Activated CD4-positive, alpha-beta T cell treated with anti-CD3 and anti-CD28 coated beads, Interleukin-2, amount 10 ng/mL, durations not matched to agents 24 days and 14 days (primary cell): ENCODE measurements at regions of chr19 and their contacts with region 1.

Region 1: GRCh38 chr19:45886427-45887199 is 672 bp upstream of the IRF2BP1 start:
- DNase-seq: peak; percentile 96
- H3K4me3 Mint-ChIP-seq: peak overlapping the region; percentile 89
- H3K27ac Mint-ChIP-seq: peak overlapping the region; percentile 93
- H3K4me1 Mint-ChIP-seq: peaks cover 18% of the 10 kb centered on the region
- H3K27me3 Mint-ChIP-seq: no peaks in the 10 kb centered on the region

Region 2: DNA sequence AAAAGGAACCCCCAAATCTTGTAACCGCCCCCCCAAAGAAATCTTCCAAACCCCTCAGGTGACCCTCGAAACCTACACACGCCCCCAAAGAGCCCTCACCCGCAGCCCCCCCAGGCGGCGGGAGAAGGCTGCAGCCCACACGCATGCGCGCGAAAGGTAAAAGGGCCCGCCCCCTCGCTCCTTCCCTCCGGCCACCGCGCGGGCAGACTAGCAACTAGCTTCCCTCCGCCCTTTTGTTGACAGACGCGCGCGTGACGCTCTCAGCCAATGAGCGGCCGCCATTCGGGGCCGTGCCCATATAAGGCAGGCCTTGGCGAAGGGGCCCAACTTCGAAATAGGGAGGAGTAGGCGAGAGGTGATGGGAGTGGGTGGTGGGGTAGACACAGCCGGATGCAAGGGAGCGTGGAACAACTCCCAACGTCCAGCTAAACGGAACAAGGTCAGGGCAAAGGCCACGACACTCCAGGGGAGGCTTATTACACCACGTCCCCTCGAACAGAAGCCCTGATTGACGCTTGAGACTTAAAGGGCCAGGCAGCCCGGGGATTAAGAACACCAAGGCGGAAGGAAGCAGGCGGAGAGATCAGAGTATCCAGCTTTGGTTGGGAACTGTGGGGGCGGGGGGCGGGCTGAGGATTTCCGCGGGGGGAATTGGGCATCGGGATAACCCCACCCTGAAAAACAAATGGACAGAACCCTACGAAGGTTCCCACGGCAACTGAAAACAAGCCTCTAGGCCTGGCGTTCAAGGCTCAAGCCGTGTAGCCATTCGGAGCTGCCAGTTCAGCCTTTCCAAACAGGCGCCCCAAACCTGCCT is 169.2 kb before region 1 on chr19:
- intact Hi-C with region 1: loop called (anchors 1 kb)
- DNase-seq: peak; percentile 99
- H3K4me3 Mint-ChIP-seq: peak overlapping the region; percentile 88
- H3K27ac Mint-ChIP-seq: peak overlapping the region; percentile 97
- H3K4me1 Mint-ChIP-seq: peaks cover 33% of the 10 kb centered on the region
- H3K27me3 Mint-ChIP-seq: peaks cover 2% of the 10 kb centered on the region

Region 3: GRCh38 chr19:45817010-45817724 is 69.4 kb before region 1 on chr19:
- intact Hi-C with region 1: loop called (anchors 2 kb)
- DNase-seq: peak; percentile 98
- H3K4me3 Mint-ChIP-seq: no peak overlapping the region
- H3K27ac Mint-ChIP-seq: no peak overlapping the region
- H3K4me1 Mint-ChIP-seq: peaks cover 3% of the 10 kb centered on the region
- H3K27me3 Mint-ChIP-seq: no peaks in the 10 kb centered on the region

Region 4: DNA sequence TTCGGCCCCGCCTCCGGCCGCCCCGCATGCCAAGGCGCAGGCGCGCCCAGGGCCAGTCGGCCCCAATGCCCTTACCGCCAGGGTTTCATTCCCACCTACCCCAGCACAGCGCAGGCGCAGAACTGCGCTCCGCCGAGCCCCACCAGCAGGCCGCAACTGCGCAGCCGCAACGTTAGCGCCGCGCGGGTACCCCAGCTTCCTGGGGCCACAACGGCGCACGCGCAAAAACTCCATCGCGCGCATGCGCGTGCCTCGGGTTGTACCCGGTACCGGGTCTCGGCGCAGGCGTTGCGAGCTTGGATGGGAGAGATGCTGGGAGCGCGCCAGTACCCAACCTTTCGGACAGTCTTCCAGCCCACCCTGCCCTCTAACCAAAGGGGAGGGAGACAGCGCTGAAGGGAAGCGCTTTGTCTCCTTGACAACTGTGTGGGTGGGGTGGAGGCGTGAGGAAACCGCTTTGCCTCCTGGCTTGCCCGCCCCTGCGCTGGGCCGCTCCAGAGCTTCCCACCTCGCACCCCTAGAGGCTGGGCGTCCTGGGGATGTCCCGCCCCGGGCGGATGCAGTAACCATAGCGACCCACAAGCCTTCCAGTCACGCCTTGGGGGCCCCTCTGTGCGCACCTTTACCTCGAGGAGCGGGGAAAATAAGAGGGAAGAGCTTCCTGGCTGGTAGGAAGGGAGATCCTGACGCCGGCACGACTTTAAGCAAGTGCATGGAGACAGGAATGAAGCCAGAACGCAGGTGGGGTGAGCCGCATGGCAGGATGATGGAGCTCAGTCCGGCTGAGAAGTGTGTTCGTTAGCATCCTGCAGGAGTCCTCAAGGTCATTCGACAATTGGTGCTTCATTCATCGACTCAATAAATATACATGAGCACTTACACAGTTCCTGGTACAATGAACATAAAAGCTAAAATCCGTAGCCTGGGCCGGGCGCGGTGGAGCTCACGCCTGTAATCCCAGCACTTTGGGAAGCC is 16.3 kb after region 1 on chr19:
- intact Hi-C with region 1: loop called (anchors 1 kb)
- DNase-seq: peak; percentile 100
- H3K4me3 Mint-ChIP-seq: peak overlapping the region; percentile 85
- H3K27ac Mint-ChIP-seq: peak overlapping the region; percentile 91
- H3K4me1 Mint-ChIP-seq: peaks cover 22% of the 10 kb centered on the region
- H3K27me3 Mint-ChIP-seq: peaks cover 2% of the 10 kb centered on the region

Region 5: GRCh38 chr19:45994989-45995714 is 108.5 kb after region 1 on chr19 and contains the start of gene CCDC61:
- intact Hi-C with region 1: loop called (anchors 1 kb)
- DNase-seq: peak; percentile 99
- H3K4me3 Mint-ChIP-seq: no peak within 1 kb of the TSS
- H3K27ac Mint-ChIP-seq: no peak within 1 kb of the TSS
- H3K4me1 Mint-ChIP-seq: peaks cover 20% of the 10 kb centered on the region
- H3K27me3 Mint-ChIP-seq: peaks cover 6% of the 10 kb centered on the region
- total RNA-seq, gene CCDC61: 23.1 and 30.1 TPM in 2 replicates

Region 6: DNA sequence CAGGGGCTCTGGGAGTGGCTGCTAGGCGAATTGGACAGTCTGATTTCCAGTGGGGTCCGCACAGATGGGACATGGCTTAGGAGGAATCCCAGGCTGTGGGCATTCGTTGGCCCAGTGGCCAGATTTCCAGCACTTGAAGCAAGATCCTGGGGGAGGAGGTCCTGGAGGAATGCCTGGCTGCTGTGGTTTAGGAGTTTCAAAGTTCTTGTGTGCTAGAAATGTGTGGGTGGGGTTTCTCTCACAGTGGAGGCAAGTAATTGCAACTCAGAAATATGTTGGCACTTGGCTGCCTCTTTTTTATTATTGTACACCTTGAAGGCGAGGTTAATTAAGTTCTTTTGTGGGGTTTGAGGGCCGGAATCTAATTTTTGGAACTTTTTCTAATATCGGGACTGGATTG is 220.8 kb after region 1 on chr19:
- intact Hi-C with region 1: no loop called
- DNase-seq: no peak
- H3K4me3 Mint-ChIP-seq: no peak overlapping the region
- H3K27ac Mint-ChIP-seq: no peak overlapping the region
- H3K4me1 Mint-ChIP-seq: no peaks in the 10 kb centered on the region
- H3K27me3 Mint-ChIP-seq: peaks cover 9% of the 10 kb centered on the region